Psoas muscle (tissue), 8 donors: ENCODE measurements at regions of chr10 and their contacts with region 1.

Region 1: DNA sequence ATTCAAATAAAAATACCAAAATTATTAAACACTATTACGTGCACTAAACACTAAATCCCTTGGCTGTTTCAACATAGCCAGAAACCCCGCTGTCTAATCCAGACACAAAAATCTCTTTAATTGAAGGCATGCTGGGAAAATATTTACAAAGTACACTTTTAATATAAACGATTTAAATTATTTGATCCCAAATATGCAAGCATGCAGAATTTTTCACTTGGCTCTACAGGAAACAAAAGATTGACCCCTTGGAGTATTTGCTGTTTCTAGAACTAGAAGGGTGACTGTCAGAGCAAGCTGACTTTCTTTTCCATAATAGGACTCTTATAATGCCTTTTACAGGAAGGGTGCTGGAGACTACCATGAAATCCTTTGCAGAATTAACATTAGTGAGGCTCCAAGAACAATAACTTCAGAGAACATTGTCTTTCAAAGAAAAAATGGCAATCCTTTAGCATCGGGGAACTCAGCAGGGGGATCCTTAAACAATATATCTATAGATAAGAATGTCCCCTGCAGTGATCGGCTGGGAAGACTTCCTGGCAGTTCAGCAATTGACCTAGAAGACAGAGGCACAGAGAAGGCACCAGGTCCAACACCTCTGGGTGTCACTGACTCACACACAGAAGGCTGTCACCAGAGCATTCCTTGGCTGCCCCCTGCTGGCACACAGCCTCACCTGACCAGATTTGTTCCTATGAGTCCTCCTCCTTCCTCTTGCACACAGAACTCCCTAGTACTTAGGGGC is 55.8 kb upstream of the MRLN start:
- DNase-seq: peak; percentile 78 to 92
- ATAC-seq: peak; percentile 87 to 92 (median 89)
- H3K4me3 ChIP-seq: no peak overlapping the region
- H3K27ac ChIP-seq: peak overlapping the region; percentile 59
- H3K4me1 ChIP-seq: peaks cover 26% of the 10 kb centered on the region
- H3K27me3 ChIP-seq: no peaks in the 10 kb centered on the region
- CTCF ChIP-seq: peak; percentile 80

Region 2: GRCh38 chr10:59709395-59710125 is 99.5 kb before region 1 on chr10 and contains the start of gene SLC16A9:
- intact Hi-C with region 1: loop called in 1 of 2 experiments (anchors 2 kb)
- DNase-seq: peak; percentile 52 to 80
- ATAC-seq: peak; percentile 91 to 94 (median 92)
- H3K4me3 ChIP-seq: peak within 1 kb of the TSS; percentile 84
- H3K27ac ChIP-seq: peak within 1 kb of the TSS; percentile 78
- H3K4me1 ChIP-seq: peaks cover 18% of the 10 kb centered on the region
- H3K27me3 ChIP-seq: no peaks in the 10 kb centered on the region
- CTCF ChIP-seq: peak; percentile 43
- total RNA-seq, gene SLC16A9: 0.64 to 2.5 (median 1.2) TPM

Region 3: GRCh38 chr10:59719374-59719773 is 89.7 kb before region 1 on chr10:
- intact Hi-C with region 1: loop called in 1 of 2 experiments (anchors 5 kb)
- DNase-seq: no peak
- ATAC-seq: no peak
- H3K4me3 ChIP-seq: no peak overlapping the region
- H3K27ac ChIP-seq: no peak overlapping the region
- H3K4me1 ChIP-seq: peaks cover 15% of the 10 kb centered on the region
- H3K27me3 ChIP-seq: no peaks in the 10 kb centered on the region
- CTCF ChIP-seq: peak; percentile 13

Region 4: GRCh38 chr10:59750155-59750945 is 58.7 kb before region 1 on chr10:
- intact Hi-C with region 1: loop called (anchors 5 to 10 kb)
- DNase-seq: peak; percentile 54 to 89
- ATAC-seq: peak; percentile 43 to 83 (median 80)
- H3K4me3 ChIP-seq: peak overlapping the region; percentile 65
- H3K27ac ChIP-seq: peak overlapping the region; percentile 86
- H3K4me1 ChIP-seq: peaks cover 50% of the 10 kb centered on the region
- H3K27me3 ChIP-seq: no peaks in the 10 kb centered on the region
- CTCF ChIP-seq: no peak

Region 5: DNA sequence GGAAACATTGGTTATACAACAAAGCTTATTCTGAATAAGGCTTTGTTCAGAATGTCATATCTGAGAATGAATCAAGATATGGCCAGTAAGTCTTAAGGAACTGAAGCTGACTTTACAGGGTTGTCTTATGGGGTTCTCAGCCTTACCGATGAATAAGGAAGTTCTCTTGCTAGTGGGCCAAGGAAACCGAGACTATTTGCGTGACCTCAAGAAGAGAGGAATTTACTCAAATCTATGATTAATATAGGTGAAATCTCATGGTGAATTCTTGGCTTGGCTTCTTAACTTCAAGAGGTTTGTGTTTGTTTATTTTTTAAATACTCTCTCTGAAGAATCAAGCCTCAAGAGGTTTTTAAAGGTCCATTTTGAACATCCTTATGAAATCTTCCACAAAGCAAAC is 51.1 kb before region 1 on chr10:
- intact Hi-C with region 1: loop called (anchors 5 to 10 kb)
- DNase-seq: no peak
- ATAC-seq: no peak
- H3K4me3 ChIP-seq: no peak overlapping the region
- H3K27ac ChIP-seq: no peak overlapping the region
- H3K4me1 ChIP-seq: peaks cover 11% of the 10 kb centered on the region
- H3K27me3 ChIP-seq: no peaks in the 10 kb centered on the region
- CTCF ChIP-seq: no peak